PC-9 (cell line): ENCODE measurements at regions of chr2 and their contacts with region 1.

Region 1: DNA sequence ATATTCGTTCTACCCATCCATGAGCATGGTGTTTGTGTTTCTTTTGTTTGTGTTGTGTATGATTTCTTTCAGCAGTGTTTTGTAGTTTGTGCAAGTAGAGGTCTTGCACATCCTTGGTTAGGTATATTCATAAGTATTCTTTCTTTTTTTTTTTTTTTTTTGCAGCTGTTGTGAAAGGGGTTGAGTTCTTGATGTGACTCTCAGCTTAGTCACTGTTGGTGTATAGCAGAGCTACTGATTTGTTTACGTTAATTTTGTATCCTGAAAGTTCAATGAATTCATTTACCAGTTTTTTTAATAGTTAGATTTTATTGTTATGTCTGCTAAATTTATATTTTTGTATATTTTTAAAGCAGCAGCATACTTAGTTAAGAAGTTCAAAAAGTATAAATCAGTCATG is 834.4 kb upstream of the NRXN1 start:
- DNase-seq: no peak
- H3K4me3 ChIP-seq: no peak overlapping the region
- H3K27ac ChIP-seq: no peak overlapping the region
- H3K4me1 ChIP-seq: no peaks in the 10 kb centered on the region
- H3K27me3 ChIP-seq: no peaks in the 10 kb centered on the region
- CTCF ChIP-seq: no peak

Region 2: DNA sequence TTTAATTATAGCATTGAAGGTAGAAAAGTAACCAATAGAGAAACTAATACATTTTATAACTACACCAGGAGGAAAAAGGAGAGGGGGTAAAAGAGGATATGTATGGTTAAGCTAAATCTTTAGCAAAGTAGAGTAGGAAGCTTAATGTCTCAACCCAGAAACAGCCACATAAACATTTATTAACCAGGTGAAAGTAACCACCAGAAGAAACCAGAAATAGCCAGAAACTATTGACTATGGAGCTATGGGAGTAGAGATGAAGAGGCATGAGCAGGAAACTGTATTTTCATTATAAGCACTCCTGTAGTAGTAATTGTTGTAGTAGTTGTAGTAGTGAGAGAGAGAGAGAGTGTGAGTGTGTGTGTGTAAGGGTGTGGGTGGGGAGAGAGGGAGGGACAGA is 1283.8 kb after region 1 on chr2:
- CTCF ChIA-PET with region 1: no interaction called
- POLR2A ChIA-PET with region 1: interaction called, 14 read pairs
- intact Hi-C with region 1: no loop called
- DNase-seq: no peak
- H3K4me3 ChIP-seq: no peak overlapping the region
- H3K27ac ChIP-seq: no peak overlapping the region
- H3K4me1 ChIP-seq: no peaks in the 10 kb centered on the region
- H3K27me3 ChIP-seq: no peaks in the 10 kb centered on the region
- CTCF ChIP-seq: no peak